Left ventricle myocardium inferior (tissue), 1 donor: ENCODE measurements at regions of chr11 and their contacts with region 1.

Region 1: GRCh38 chr11:132028380-132029240 is 658.2 kb downstream of the NTM start:
- DNase-seq: peak; percentile 28
- H3K4me3 ChIP-seq: no peak overlapping the region
- H3K27ac ChIP-seq: no peak overlapping the region
- H3K4me1 ChIP-seq: peaks cover 6% of the 10 kb centered on the region
- H3K27me3 ChIP-seq: no peaks in the 10 kb centered on the region
- CTCF ChIP-seq: peak; percentile 73

Region 2: GRCh38 chr11:131867457-131868257 is 161.0 kb before region 1 on chr11:
- intact Hi-C with region 1: loop called (anchors 10 kb)
- DNase-seq: peak; percentile 63
- H3K4me3 ChIP-seq: no peak overlapping the region
- H3K27ac ChIP-seq: no peak overlapping the region
- H3K4me1 ChIP-seq: no peaks in the 10 kb centered on the region
- H3K27me3 ChIP-seq: peaks cover 57% of the 10 kb centered on the region
- CTCF ChIP-seq: peak; percentile 76

Region 3: DNA sequence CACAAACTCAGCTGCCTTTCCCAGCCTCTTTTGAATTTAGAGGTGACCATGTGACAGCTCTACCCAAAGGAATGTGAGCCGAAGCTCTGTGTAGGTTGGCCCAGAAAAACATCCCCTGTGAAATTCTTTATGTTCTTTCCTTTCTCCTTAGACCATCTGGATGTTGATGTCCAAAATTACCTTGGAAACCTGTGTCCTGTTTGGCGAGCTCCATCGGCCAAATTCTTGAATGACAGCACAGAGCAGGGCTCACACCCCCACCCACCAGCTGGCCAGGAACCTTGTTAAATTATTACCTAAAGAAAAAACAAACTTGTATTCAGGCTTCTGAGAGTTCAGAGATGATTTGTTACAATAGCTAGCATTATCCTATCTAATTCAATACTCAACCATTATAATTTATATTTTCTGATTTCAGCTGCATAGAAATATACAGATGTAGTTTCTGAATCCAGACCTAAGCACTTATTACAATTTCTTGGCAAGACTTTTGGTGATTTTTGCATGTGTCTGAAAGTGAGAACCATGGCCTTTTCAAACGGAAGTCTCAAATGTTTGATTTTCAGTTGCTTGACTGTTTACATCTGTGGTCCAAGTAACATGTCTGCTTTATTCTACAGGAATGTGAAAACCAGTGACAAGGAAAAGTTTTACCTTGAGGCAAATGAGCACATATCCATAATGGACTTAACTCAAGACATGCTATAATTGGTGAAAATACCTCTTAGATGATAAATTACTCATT is 104.0 kb before region 1 on chr11:
- intact Hi-C with region 1: loop called (anchors 10 kb)
- DNase-seq: no peak
- H3K4me3 ChIP-seq: no peak overlapping the region
- H3K27ac ChIP-seq: no peak overlapping the region
- H3K4me1 ChIP-seq: peaks cover 12% of the 10 kb centered on the region
- H3K27me3 ChIP-seq: peaks cover 5% of the 10 kb centered on the region
- CTCF ChIP-seq: no peak

Region 4: DNA sequence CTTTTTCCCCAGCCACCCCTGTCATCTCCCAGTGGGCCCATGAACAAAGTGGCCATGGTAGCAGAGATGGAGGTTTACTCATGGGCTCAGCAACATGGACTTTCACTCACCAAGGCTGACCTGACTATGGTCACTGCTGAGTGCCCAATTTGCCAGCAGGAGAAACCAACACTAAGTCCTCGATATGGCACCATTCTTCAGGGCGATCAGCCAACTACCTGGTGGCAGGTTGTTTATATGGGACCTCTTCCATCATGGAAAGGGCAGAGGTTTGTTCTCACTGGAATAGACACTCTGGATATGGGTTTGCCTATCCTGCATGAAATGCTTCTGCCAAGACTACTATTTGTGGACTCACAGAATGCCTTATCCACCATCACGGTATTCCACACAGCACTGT is 350.9 kb after region 1 on chr11:
- intact Hi-C with region 1: no loop called
- DNase-seq: no peak
- H3K4me3 ChIP-seq: no peak overlapping the region
- H3K27ac ChIP-seq: no peak overlapping the region
- H3K4me1 ChIP-seq: no peaks in the 10 kb centered on the region
- H3K27me3 ChIP-seq: no peaks in the 10 kb centered on the region
- CTCF ChIP-seq: no peak